Activated CD8-positive, alpha-beta memory T cell treated with anti-CD3 and anti-CD28 coated beads, Interleukin-2, amount 10 ng/mL, durations not matched to agents 7 days and 5 days (primary cell): ENCODE measurements at regions of chr19 and their contacts with region 1.

Region 1: DNA sequence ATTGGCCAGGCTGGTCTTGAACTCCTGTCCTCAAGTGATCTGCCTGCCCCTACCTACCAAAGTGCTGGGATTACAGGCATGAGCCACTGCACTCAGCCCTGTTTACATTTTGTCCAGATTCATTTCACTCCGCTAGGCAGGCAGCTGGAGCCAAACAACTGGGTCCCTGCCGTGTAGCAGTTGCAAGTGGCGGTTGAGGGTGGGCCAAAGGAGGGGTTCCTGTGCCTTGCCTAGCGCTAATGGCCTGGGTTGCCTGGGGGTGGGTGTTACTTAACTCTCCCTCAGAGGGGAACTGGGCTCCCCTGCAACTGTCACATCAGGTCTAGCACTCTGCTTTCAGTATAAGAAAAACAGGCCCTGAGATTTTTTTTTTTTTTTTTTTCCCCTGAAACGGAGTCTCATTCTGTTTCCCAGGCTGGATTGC is 7.4 kb downstream of the ACP5 start:
- DNase-seq: no peak
- ATAC-seq: no peak
- H3K4me3 Mint-ChIP-seq: no peak overlapping the region
- H3K27ac Mint-ChIP-seq: no peak overlapping the region
- H3K4me1 Mint-ChIP-seq: peaks cover 30% of the 10 kb centered on the region
- H3K27me3 Mint-ChIP-seq: no peaks in the 10 kb centered on the region

Region 2: GRCh38 chr19:11465613-11466012 is 104.4 kb before region 1 on chr19:
- CTCF ChIA-PET with region 1: no interaction called
- DNase-seq: no peak
- ATAC-seq: no peak
- H3K4me3 Mint-ChIP-seq: no peak overlapping the region
- H3K27ac Mint-ChIP-seq: no peak overlapping the region
- H3K4me1 Mint-ChIP-seq: no peaks in the 10 kb centered on the region
- H3K27me3 Mint-ChIP-seq: peaks cover 2% of the 10 kb centered on the region

Region 3: GRCh38 chr19:11558881-11559828 is 10.9 kb before region 1 on chr19 and contains the start of gene ELOF1:
- CTCF ChIA-PET with region 1: interaction called, 233 read pairs
- DNase-seq: peak; percentile 99
- ATAC-seq: peak; percentile 96
- H3K4me3 Mint-ChIP-seq: peak within 1 kb of the TSS; percentile 85
- H3K27ac Mint-ChIP-seq: peak within 1 kb of the TSS; percentile 92
- H3K4me1 Mint-ChIP-seq: peaks cover 58% of the 10 kb centered on the region
- H3K27me3 Mint-ChIP-seq: no peaks in the 10 kb centered on the region
- total RNA-seq, gene ELOF1: 55.1 to 67.2 TPM

Region 4: DNA sequence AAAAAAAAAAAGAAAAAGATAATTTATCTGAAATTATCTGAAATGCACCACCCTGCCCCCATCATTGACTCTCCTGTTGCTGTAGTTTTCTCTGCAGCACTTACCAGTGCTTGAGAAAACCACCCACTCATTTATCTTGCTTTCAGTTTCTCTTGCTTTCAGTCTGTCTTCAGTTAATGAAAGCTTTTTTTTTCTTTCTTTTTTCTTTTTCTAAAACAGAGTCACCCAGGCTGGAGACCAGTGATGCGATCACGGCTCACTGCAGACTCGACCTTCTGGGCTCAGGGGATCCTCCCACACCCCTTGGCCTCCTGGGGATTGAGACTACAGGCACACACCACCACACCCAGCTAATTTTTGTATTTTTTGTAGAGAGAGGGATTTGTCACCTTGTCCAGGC is 11.7 kb after region 1 on chr19:
- CTCF ChIA-PET with region 1: interaction called, 15 read pairs
- DNase-seq: peak; percentile 75
- ATAC-seq: peak; percentile 74
- H3K4me3 Mint-ChIP-seq: peak overlapping the region; percentile 71
- H3K27ac Mint-ChIP-seq: peak overlapping the region; percentile 97
- H3K4me1 Mint-ChIP-seq: peaks cover 43% of the 10 kb centered on the region
- H3K27me3 Mint-ChIP-seq: no peaks in the 10 kb centered on the region